Endothelial cell of umbilical vein (primary cell): ENCODE measurements at regions of chr2 and their contacts with region 1.

Region 1: DNA sequence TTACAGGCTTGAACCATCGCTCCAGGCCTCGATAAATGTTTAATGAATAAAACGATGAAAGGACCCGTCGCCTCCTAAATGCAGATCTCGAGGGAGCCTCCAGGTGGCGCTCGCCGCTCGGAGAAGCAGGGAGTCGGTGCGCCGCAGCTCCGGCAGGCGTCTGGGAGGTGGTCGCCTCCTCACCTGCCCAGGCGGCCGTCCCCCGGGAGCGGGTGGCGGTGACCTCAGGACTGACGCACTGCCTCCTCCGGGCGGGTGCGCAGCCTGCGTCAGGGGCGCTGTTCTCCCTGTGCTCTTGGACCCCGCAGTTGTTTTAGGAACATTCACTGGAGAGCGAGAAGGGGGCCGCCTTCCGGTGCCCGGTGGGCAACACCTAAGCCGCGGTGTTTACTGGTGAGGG is 38.6 kb upstream of the POLE4 start:
- DNase-seq: peak; percentile 47
- H3K4me3 ChIP-seq: peak overlapping the region in 1 of 3 experiments; percentile 33
- H3K27ac ChIP-seq: no peak overlapping the region
- H3K4me1 ChIP-seq: no peaks in the 10 kb centered on the region
- H3K27me3 ChIP-seq: no peaks in the 10 kb centered on the region
- CTCF ChIP-seq: peak; percentile 84 to 93
- POLR2A ChIP-seq: no peak

Region 2: GRCh38 chr2:74908748-74909444 is 10.9 kb before region 1 on chr2:
- CTCF ChIA-PET with region 1: interaction called, 12 read pairs
- POLR2A ChIA-PET with region 1: no interaction called
- dilution Hi-C with region 1: no loop called
- intact Hi-C with region 1: no loop called
- DNase-seq: no peak
- H3K4me3 ChIP-seq: no peak overlapping the region
- H3K27ac ChIP-seq: no peak overlapping the region
- H3K4me1 ChIP-seq: peaks cover 3% of the 10 kb centered on the region
- H3K27me3 ChIP-seq: peaks cover 5 to 8% of the 10 kb centered on the region in 2 experiments
- CTCF ChIP-seq: no peak
- POLR2A ChIP-seq: no peak

Region 3: DNA sequence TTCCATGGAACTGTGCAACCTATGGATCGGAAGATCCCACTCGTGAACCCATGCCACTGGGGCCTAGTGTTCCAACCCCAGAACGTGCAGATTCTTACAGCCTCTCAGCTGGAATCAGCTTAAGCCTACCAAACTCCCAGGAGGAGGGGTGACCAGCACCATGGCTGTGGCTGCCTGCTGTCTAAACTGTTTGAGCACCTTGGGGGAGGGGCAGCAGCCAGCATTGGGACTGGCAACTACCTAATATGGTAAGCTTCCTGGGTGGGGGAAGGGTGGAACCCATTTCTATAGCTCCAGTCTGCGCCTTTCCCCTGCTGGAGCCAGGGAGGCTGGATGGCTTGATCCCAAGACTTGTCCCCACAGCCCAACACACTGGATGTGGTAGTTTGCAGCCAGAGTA is 27.9 kb after region 1 on chr2:
- CTCF ChIA-PET with region 1: no interaction called
- POLR2A ChIA-PET with region 1: no interaction called
- dilution Hi-C with region 1: no loop called
- intact Hi-C with region 1: no loop called
- DNase-seq: no peak
- H3K4me3 ChIP-seq: no peak overlapping the region
- H3K27ac ChIP-seq: no peak overlapping the region
- H3K4me1 ChIP-seq: no peaks in the 10 kb centered on the region
- H3K27me3 ChIP-seq: no peaks in the 10 kb centered on the region
- CTCF ChIP-seq: no peak
- POLR2A ChIP-seq: no peak

Region 4: GRCh38 chr2:75053484-75054112 is 133.8 kb after region 1 on chr2:
- CTCF ChIA-PET with region 1: no interaction called
- POLR2A ChIA-PET with region 1: no interaction called
- dilution Hi-C with region 1: no loop called
- intact Hi-C with region 1: loop called (anchors 1 kb)
- DNase-seq: peak; percentile 10
- H3K4me3 ChIP-seq: no peak overlapping the region
- H3K27ac ChIP-seq: no peak overlapping the region
- H3K4me1 ChIP-seq: no peaks in the 10 kb centered on the region
- H3K27me3 ChIP-seq: no peaks in the 10 kb centered on the region
- CTCF ChIP-seq: peak; percentile 44 to 54
- POLR2A ChIP-seq: no peak

Region 5: DNA sequence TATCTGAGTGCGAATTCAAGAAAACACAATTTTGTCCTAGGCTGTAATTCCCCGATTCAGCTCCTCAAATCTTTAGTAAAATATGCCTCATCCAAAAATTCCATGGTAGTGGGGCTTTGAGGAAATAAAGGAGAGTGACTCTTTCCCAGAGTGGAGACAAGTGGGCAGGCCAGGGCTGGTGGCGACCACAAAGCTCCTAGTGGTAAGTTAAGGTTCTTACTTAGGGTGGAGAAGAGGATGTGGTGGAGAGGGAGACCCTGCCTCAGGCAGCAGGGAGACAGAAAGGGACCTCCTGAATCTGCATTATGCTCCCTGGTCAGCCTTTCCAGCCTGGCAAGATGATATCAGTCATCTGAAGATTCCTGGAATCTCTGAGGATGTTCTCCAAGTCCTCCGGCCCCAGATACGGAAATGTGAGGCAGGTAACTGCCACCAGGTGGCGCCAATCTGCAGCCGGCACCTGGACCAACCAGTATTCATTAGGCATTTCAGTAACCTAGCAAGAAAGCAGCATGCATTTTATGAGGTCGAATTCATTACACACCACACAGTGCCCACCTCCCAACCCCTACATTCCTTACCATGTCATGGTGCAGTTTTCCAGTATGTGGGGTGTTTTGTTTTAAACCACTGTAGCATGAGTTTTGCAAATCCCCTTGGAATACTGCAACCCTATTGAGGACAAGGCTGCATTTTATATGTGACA is 145.0 kb after region 1 on chr2:
- CTCF ChIA-PET with region 1: interaction called, 16 read pairs
- POLR2A ChIA-PET with region 1: no interaction called
- dilution Hi-C with region 1: no loop called
- intact Hi-C with region 1: loop called (anchors 2 kb)
- DNase-seq: peak; percentile 66
- H3K4me3 ChIP-seq: no peak overlapping the region
- H3K27ac ChIP-seq: no peak overlapping the region
- H3K4me1 ChIP-seq: no peaks in the 10 kb centered on the region
- H3K27me3 ChIP-seq: no peaks in the 10 kb centered on the region
- CTCF ChIP-seq: peak; percentile 88 to 91
- POLR2A ChIP-seq: no peak

Region 6: DNA sequence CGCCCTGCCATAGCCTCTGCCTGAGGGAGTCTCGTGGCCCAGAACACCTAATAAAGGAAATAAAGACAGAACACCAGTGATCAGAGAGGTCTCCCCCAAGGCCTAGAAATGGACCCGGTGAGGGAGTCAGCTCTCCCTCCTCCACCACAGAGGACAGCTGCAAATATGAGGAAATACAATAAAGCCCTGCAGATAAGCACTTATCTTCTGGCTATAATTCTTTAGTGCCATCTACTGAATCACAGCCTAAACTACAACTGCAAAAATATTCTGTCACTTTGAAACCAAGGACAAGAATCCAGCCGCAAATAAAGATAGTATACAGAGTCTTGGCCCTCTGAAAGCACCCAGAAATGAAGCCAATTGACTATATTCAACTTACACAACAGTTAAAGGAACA is 321.9 kb after region 1 on chr2:
- CTCF ChIA-PET with region 1: interaction called, 22 read pairs
- POLR2A ChIA-PET with region 1: no interaction called
- dilution Hi-C with region 1: no loop called
- intact Hi-C with region 1: loop called (anchors 2 kb)
- DNase-seq: peak; percentile 8
- H3K4me3 ChIP-seq: no peak overlapping the region
- H3K27ac ChIP-seq: no peak overlapping the region
- H3K4me1 ChIP-seq: no peaks in the 10 kb centered on the region
- H3K27me3 ChIP-seq: no peaks in the 10 kb centered on the region
- CTCF ChIP-seq: peak; percentile 13 to 25
- POLR2A ChIP-seq: no peak